Right ventricle myocardium inferior (tissue), 1 donor: ENCODE measurements at regions of chr14 and their contacts with region 1.

Region 1: GRCh38 chr14:20343092-20343861 is at the start of gene PARP2:
- DNase-seq: peak; percentile 98
- ATAC-seq: peak; percentile 98
- total RNA-seq, gene PARP2: 15.7 TPM

Region 2: DNA sequence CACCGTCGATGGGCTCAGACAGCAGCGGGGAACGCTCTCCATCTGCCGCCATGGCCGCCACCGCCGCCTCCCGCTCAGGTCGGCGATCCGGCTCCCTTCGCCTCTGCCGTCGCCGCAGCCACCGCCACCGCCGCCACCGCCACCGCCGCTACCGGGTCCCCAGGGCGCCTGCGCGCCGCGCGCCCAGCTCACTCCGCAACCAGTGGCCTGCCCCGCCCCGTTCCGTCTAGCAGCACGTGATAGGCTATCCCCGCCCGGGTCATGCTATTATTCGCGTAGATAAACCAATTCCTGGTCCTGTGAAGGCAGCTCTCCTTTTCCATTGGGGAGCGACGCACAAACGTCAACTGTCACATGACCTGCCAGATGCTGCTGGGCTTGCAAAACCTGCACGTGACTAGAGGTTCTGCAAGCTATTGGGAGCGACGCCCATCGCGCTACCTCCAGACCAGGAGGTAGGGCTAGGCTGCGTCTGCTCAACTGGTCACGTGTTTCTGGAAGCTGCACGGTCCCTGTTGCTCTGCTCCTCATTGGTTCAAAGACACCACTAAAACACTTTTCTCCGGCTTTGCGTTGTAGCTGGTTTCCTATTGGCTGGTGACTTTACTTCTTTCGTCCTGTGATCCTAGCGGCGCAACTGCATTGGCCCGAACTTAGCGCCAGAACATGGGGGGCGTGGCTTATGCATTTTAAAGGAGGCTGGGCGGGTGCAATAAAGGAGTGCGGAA is 118.2 kb after region 1 on chr14 and contains the start of gene PIP4P1:
- intact Hi-C with region 1: loop called (anchors 2 kb)
- DNase-seq: peak; percentile 100
- ATAC-seq: peak; percentile 98
- total RNA-seq, gene PIP4P1: 17.2 TPM